Heart left ventricle (tissue), 16 donors: ENCODE measurements at regions of chr13 and their contacts with region 1.

Region 1: GRCh38 chr13:31431722-31432137 is 232.0 kb downstream of the B3GLCT start:
- DNase-seq: peak in 4 of 5 donors; percentile 34 to 51 (median 40)
- ATAC-seq: peak in 3 of 4 donors; percentile 47 to 72 (median 62)
- H3K4me3 ChIP-seq: no peak overlapping the region
- H3K27ac ChIP-seq: no peak overlapping the region
- H3K4me1 ChIP-seq: no peaks in the 10 kb centered on the region
- H3K27me3 ChIP-seq: no peaks in the 10 kb centered on the region
- CTCF ChIP-seq: peak; percentile 79 to 90 (median 86)
- POLR2A ChIP-seq: no peak

Region 2: GRCh38 chr13:31050486-31051400 is 381.0 kb before region 1 on chr13:
- intact Hi-C with region 1: no loop called
- DNase-seq: no peak
- ATAC-seq: no peak
- H3K4me3 ChIP-seq: no peak overlapping the region
- H3K27ac ChIP-seq: no peak overlapping the region
- H3K4me1 ChIP-seq: peaks cover 0 to 16% (median 9%) of the 10 kb centered on the region in 12 donors
- H3K27me3 ChIP-seq: no peaks in the 10 kb centered on the region
- CTCF ChIP-seq: peak in 2 of 12 donors; percentile 25 to 29
- POLR2A ChIP-seq: no peak

Region 3: DNA sequence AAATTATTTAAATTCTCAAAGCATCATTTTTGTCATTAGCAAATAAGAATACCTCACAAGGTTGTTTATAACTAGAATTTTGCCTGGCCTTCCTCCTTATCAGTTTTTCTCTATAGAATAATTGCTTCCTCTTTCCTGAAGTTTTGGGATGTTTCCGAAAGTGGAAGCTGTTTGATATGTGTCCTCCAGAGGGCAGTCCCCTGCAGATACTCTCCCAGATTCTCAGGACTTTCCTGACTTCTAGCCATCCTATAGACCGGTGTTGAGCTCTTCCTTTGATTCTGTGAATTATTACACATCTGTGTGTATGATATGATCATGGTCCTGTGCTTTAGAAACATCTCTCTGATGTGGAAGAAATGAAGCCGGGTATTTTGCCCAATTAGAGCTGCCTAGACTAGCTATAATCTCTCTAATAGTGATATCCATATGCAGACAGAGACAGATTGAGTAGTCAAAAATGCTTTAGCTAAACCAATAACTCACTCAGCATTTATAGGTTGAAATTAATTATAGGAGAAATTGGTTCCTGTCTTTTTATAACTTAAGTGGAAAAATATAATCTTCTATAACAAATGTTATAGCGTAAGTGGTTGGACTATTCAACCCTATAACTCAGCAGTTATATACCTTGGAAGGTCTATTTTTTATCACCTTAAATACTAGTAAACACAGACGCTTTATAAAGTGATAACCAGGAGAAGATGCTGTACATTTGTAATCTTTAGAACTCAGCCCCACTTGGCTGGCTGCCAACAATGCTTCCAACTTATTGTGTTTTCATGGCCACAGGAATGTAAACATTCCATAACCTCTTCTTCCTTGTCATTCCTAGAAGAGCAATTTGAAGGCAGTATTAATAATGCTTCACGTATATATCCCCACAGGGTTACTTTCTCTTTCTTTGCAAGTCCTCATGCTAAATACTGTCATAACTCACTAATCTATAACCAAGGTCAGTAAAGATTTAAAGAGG is 106.6 kb after region 1 on chr13:
- intact Hi-C with region 1: loop called in 1 of 10 experiments (anchors 10 kb)
- DNase-seq: no peak
- ATAC-seq: no peak
- H3K4me3 ChIP-seq: no peak overlapping the region
- H3K27ac ChIP-seq: no peak overlapping the region
- H3K4me1 ChIP-seq: no peaks in the 10 kb centered on the region
- H3K27me3 ChIP-seq: peaks cover 0 to 5% (median 0%) of the 10 kb centered on the region in 9 donors
- CTCF ChIP-seq: peak in 11 of 12 donors; percentile 9 to 66 (median 50)
- POLR2A ChIP-seq: no peak

Region 4: GRCh38 chr13:31797154-31797775 is 365.5 kb after region 1 on chr13:
- intact Hi-C with region 1: loop called in 6 of 10 experiments (anchors 1 to 5 kb)
- DNase-seq: no peak
- ATAC-seq: peak in 1 of 4 donors; percentile 61
- H3K4me3 ChIP-seq: no peak overlapping the region
- H3K27ac ChIP-seq: no peak overlapping the region
- H3K4me1 ChIP-seq: peaks cover 0 to 8% (median 0%) of the 10 kb centered on the region in 12 donors
- H3K27me3 ChIP-seq: no peaks in the 10 kb centered on the region
- CTCF ChIP-seq: peak in 10 of 12 donors; percentile 7 to 59 (median 42)
- POLR2A ChIP-seq: no peak